ENCODE measurements at regions of chr4 and their contacts with region 1.

Region 1: GRCh38 chr4:98260579-98261290 is 449 bp upstream of the RAP1GDS1 start:
- DNase-seq: peak; percentile 89
- ATAC-seq: peak; percentile 85
- H3K4me3 Mint-ChIP-seq: peak overlapping the region; percentile 86
- H3K27ac Mint-ChIP-seq: peak overlapping the region; percentile 97
- H3K4me1 Mint-ChIP-seq: peaks cover 27% of the 10 kb centered on the region
- H3K27me3 Mint-ChIP-seq: no peaks in the 10 kb centered on the region; the same call in 1 of the 2 replicates
- CTCF ChIP-seq: no peak

Region 2: DNA sequence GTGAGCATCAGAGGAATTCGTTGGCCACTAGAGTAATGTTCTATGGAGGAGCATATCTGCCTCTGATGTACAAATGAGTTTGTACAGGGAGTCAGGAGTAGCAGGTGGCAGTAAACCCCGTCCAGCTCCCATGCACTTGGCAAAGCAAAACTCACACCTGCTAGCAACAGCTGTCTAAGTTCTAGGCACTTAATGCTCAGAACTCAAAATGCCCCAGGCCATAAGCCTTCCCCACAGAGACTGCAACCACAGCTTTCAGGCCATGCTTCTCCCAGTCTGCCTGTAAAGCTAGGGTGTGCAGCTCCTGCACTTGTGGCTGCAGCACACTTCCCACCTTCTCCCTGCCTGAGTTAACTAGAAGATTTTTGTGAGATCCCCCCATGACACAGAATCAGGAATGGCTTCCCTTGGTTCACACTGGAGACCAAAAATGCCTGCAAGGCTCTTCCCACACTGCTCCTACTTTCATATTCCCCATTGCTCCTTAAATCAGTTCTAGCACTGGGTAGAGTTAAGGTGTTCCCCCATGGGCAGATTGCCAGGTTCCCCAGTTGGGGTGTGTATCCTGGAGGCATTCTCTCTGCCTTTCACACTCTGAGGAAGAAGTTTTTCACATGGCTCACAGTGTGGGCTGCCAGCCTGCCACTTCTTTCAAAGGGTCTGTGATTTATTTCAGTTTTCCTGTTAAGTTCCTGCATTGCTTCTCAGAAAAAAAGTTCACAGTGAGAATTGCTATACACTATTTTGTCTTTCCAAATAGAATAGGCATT is 307.4 kb before region 1 on chr4:
- CTCF ChIA-PET with region 1: no interaction called
- POLR2A ChIA-PET with region 1: no interaction called
- DNase-seq: no peak
- ATAC-seq: no peak
- H3K4me3 Mint-ChIP-seq: no peak overlapping the region
- H3K27ac Mint-ChIP-seq: no peak overlapping the region
- H3K4me1 Mint-ChIP-seq: no peaks in the 10 kb centered on the region
- H3K27me3 Mint-ChIP-seq: no peaks in the 10 kb centered on the region
- CTCF ChIP-seq: no peak

Region 3: DNA sequence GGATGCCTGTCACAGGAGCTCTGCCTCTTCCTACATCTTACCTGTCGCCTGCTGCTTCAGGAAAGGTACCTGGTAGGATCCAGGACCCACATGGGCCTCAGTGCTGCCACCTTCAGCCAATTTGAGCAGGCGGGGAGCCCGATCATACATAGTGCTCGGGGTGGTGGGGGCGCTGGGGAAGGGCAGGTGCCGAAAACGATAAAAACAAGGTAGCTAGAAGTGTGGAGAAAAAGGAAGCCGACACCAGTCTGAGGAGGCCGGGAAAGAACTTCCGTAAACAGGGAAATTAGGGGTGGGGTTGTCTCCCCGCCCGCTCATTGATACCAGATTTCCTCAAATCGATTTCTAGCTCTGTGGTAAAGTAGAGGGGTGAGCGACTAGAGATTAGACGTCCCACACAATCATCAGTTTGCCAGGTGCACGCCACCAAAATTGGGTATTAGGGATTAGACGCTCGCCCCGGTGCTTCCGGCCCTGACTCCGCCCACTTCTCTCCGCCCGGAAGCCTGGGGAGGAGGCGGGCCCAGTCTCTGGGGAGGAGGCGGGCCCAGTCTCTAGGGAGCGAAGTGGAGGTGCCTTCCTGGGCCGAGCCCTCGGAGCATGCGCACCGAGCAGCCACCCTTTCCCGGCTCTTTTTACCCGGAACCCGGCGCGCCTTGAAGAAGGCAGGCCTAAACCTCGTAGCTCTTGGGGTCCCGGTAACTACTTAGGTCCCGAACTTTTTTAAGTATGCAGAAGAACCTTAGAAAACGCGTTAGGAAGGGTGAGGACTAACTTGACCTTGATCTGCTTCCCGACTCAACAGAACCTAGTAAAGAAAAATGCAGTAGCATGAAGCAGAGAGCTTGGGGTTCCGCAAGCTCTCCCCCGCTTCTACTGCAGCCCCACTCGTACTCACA is 117.5 kb before region 1 on chr4 and contains the start of gene STPG2:
- CTCF ChIA-PET with region 1: interaction called, 8 read pairs
- POLR2A ChIA-PET with region 1: interaction called, 10 read pairs
- DNase-seq: peak; percentile 95
- ATAC-seq: peak; percentile 97
- H3K4me3 Mint-ChIP-seq: peak within 1 kb of the TSS; percentile 92
- H3K27ac Mint-ChIP-seq: peak within 1 kb of the TSS; percentile 98
- H3K4me1 Mint-ChIP-seq: peaks cover 22% of the 10 kb centered on the region
- H3K27me3 Mint-ChIP-seq: no peaks in the 10 kb centered on the region
- CTCF ChIP-seq: peak; percentile 52
- total RNA-seq, gene STPG2: 0.17 to 0.39 TPM (median 0.18 TPM) in 3 replicates

Region 4: GRCh38 chr4:98341309-98341708 is 80.6 kb after region 1 on chr4:
- CTCF ChIA-PET with region 1: no interaction called
- POLR2A ChIA-PET with region 1: interaction called, 10 read pairs
- DNase-seq: no peak
- ATAC-seq: no peak
- H3K4me3 Mint-ChIP-seq: no peak overlapping the region
- H3K27ac Mint-ChIP-seq: no peak overlapping the region
- H3K4me1 Mint-ChIP-seq: peaks cover 27% of the 10 kb centered on the region
- H3K27me3 Mint-ChIP-seq: no peaks in the 10 kb centered on the region
- CTCF ChIP-seq: no peak

Measured in WTC11 (cell line).